MCF 10A (cell line): ENCODE measurements at regions of chr1 and their contacts with region 1.

Region 1: GRCh38 chr1:181117638-181118449 is 29.3 kb downstream of the IER5 start:
- DNase-seq: peak; percentile 89
- H3K4me3 Mint-ChIP-seq: no peak overlapping the region
- H3K27ac Mint-ChIP-seq: peak overlapping the region; percentile 77
- H3K4me1 Mint-ChIP-seq: peaks cover 50% of the 10 kb centered on the region
- H3K27me3 Mint-ChIP-seq: no peaks in the 10 kb centered on the region
- CTCF ChIP-seq: no peak

Region 2: GRCh38 chr1:181099152-181100014 is 18.5 kb before region 1 on chr1:
- CTCF ChIA-PET with region 1: interaction called, 24 read pairs
- POLR2A ChIA-PET with region 1: interaction called, 1,371 read pairs
- intact Hi-C with region 1: no loop called
- DNase-seq: peak; percentile 94
- H3K4me3 Mint-ChIP-seq: peak overlapping the region; percentile 26
- H3K27ac Mint-ChIP-seq: peak overlapping the region; percentile 72
- H3K4me1 Mint-ChIP-seq: peaks cover 65% of the 10 kb centered on the region
- H3K27me3 Mint-ChIP-seq: no peaks in the 10 kb centered on the region
- CTCF ChIP-seq: no peak

Region 3: DNA sequence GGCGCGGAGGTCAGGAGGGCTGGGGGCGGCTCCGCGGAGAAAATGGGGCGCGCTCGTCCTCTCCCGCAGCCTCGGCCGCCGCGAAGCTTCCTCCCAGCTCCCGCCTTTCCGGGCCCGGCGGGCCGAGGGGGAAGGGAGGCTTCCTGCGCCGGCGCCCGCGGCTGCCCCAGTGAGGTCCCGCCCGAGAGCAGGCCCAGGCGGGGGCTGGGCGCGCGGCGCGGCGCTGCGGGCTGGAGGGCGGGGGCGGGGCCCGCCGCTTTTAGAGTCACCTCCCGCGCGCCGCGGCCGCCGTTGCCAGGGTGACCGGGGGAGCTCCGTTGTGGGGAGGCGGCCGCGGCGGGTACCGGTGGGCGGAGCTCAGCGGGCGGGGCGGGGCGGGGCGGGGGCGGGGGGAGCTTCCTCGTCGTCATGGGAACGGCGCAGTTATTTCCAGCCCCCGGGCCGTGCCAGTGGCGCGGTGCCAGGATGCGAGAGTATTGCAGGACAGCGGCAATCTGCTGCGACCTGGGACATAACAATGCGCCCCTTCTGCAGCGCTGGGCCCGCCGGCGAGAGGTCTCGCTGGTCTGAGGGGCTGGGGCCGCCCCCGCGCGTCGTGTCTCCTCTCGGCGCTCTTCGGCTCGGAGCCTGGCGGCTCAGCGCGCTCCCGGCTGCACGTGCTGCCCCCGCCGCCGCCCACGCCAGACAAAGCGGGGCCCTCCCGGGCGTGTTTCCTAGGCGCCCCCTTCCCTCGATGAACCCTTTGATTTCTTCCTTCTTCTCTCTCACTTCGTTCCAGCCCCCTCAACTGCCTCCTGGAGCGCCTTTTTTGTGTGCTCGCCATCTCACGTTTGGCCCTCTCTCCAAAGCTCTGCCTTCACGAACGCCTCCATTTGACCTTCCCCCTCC is 12.5 kb before region 1 on chr1:
- CTCF ChIA-PET with region 1: interaction called, 24 read pairs
- POLR2A ChIA-PET with region 1: interaction called, 1,371 read pairs
- intact Hi-C with region 1: no loop called
- DNase-seq: peak; percentile 95
- H3K4me3 Mint-ChIP-seq: peak overlapping the region; percentile 65
- H3K27ac Mint-ChIP-seq: peak overlapping the region; percentile 22
- H3K4me1 Mint-ChIP-seq: peaks cover 61% of the 10 kb centered on the region
- H3K27me3 Mint-ChIP-seq: no peaks in the 10 kb centered on the region
- CTCF ChIP-seq: no peak

Region 4: GRCh38 chr1:181128592-181129497 is 11.0 kb after region 1 on chr1:
- CTCF ChIA-PET with region 1: interaction called, 4 read pairs
- POLR2A ChIA-PET with region 1: interaction called, 1,402 read pairs
- intact Hi-C with region 1: no loop called
- DNase-seq: no peak
- H3K4me3 Mint-ChIP-seq: no peak overlapping the region
- H3K27ac Mint-ChIP-seq: no peak overlapping the region
- H3K4me1 Mint-ChIP-seq: peaks cover 32% of the 10 kb centered on the region
- H3K27me3 Mint-ChIP-seq: no peaks in the 10 kb centered on the region
- CTCF ChIP-seq: no peak